Activated B cell treated with CpG ODN at 0.5 μM for 24 hours (primary cell): ENCODE measurements at regions of chr15 and their contacts with region 1.

Region 1: GRCh38 chr15:101008158-101009139 is 89.3 kb downstream of the LRRK1 start:
- DNase-seq: peak; percentile 89
- ATAC-seq: peak; percentile 96
- H3K4me3 Mint-ChIP-seq: peak overlapping the region; percentile 85
- H3K27ac Mint-ChIP-seq: no peak overlapping the region
- H3K4me1 Mint-ChIP-seq: peaks cover 23% of the 10 kb centered on the region
- H3K27me3 Mint-ChIP-seq: no peaks in the 10 kb centered on the region
- CTCF ChIP-seq: peak; percentile 62

Region 2: DNA sequence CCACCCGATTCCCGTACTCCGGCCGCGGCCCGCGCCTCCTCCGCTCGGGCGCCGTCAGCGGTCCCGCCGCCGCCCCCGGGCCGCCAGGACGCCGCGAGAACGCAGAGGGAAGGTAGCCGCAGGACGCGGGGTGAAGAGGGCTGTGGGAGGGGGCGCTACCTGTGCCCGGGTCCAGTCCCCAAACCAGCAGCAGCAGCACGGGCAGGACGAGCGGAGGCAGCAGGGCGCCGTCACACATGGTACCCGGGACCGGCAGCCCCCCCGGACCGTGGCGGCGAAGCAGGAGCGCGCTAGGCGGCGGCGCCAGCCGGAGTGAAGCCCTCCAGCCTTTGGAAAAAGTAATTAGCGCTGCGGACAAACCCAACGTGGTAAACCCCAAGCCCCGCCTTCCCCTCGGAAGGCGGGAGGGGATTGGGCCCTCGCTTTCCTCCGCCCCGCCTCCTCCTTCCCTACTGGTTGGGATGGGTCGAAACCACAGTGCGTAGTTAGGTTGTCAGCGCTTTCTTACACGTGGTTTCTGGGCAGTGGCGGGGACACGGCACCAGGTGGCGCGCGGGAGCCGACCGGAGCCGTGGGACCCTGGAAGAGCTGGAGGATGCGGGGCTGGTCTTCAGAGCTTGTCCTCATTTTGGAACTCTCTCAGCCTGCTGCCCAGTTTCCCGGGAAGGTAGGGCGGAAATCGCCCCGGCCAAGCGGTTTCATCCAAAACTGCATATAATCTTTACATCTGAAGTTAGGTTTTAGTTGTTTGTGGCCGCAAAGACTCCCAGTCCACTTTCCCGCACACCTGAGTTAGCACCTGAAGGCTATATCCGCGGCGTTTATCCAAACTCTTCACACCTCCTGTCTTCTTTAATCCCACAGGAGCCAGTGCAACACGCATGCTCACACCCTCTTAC is 666.5 kb before region 1 on chr15 and contains the start of gene ADAMTS17:
- CTCF ChIA-PET with region 1: no interaction called
- POLR2A ChIA-PET with region 1: no interaction called
- intact Hi-C with region 1: loop called (anchors 5 kb)
- DNase-seq: peak; percentile 70
- ATAC-seq: peak; percentile 99
- H3K4me3 Mint-ChIP-seq: peak within 1 kb of the TSS; percentile 50
- H3K27ac Mint-ChIP-seq: no peak within 1 kb of the TSS
- H3K4me1 Mint-ChIP-seq: peaks cover 9% of the 10 kb centered on the region
- H3K27me3 Mint-ChIP-seq: peaks cover 29% of the 10 kb centered on the region
- CTCF ChIP-seq: no peak
- total RNA-seq, gene ADAMTS17: 1.6 TPM in 1 of 2 replicates, not detected in the other

Region 3: DNA sequence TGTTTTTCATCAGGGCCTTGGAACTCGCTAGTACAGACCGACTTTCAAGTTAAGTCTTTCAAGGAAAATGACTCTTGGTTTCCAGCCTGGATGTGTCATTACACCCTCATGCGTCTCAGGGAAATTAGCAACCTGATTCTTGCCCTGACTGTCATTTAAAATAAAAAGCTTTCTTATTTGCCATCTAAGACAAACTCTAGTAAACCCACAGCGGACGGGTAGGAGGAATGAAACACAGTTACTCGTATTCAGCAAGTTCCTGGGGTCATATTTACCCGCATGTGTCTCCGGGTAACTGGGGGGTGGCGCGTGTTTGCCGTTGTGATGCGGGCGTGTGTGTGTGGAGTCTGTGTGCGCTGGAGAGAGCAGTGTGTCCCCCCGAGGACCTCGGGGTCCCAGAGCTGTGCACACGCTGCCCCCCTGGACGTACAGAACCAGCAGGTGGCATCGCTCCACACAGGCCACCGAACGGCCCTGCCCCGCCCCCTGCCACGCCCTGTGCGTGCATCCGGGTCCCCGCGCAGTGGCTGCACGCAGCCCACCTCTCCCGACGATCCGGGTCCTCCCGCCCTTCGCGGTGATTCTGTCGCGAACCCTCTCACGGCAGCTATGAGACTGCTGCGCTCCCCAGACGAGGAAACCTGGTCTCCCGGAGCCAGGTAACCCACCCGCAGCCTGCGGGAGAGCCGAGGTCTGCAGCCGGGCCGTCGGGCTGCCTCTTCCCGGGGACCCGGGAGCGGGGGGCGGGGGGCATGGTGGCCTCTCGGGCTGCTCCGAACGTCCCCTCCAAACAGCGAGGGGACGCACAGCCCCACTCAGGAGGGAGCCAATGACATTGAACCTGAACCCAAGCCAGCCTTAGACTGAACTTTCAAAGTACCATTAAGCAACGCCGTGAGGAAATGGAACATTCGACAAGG is 158.9 kb before region 1 on chr15:
- CTCF ChIA-PET with region 1: no interaction called
- POLR2A ChIA-PET with region 1: interaction called, 3 read pairs
- intact Hi-C with region 1: loop called (anchors 1 kb)
- DNase-seq: peak; percentile 51
- ATAC-seq: peak; percentile 95
- H3K4me3 Mint-ChIP-seq: peak overlapping the region; percentile 81
- H3K27ac Mint-ChIP-seq: no peak overlapping the region
- H3K4me1 Mint-ChIP-seq: peaks cover 5% of the 10 kb centered on the region
- H3K27me3 Mint-ChIP-seq: peaks cover 31% of the 10 kb centered on the region
- CTCF ChIP-seq: no peak

Region 4: GRCh38 chr15:100863796-100864267 is 144.6 kb before region 1 on chr15:
- CTCF ChIA-PET with region 1: no interaction called
- POLR2A ChIA-PET with region 1: no interaction called
- intact Hi-C with region 1: no loop called
- DNase-seq: no peak
- ATAC-seq: no peak
- H3K4me3 Mint-ChIP-seq: no peak overlapping the region
- H3K27ac Mint-ChIP-seq: no peak overlapping the region
- H3K4me1 Mint-ChIP-seq: no peaks in the 10 kb centered on the region
- H3K27me3 Mint-ChIP-seq: peaks cover 17% of the 10 kb centered on the region
- CTCF ChIP-seq: no peak

Region 5: DNA sequence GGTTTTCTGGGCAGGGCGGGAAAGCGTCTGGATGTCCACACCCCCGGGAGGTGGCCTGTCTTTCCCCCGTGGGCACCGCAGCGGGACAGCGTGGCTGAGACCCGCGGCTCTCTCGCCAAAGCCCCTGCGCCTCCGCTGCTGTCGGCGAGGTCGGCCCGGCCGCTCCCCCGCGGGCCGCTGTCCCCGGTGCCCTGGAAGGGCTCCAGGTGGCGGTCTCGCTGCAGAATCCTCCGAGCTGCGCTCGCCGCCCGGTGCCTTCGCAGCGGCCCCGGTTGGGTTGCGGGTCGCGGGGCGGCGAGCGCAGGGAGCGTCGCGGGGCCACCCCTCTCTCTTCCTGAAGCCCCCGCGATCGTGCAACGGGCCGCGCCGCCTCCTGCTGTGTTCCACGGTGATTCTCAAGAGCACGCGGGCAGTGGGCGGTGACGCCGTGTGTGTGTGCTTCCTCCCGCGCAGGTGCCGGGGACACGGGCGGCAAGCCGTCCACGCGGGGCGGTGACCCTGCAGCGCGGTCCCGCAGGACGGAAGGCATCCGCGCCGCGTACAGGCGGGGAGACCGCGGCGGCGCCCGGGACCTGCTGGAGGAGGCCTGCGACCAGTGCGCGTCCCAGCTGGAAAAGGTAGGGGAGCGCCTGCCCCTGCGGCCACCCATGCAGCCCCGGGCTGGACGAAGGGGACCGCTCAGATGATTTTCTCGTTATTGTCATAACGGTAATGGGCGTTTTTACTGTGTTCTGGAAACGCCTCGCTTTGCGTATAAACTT is 34.9 kb before region 1 on chr15:
- CTCF ChIA-PET with region 1: interaction called, 6 read pairs
- POLR2A ChIA-PET with region 1: no interaction called
- intact Hi-C with region 1: loop called (anchors 5 kb)
- DNase-seq: no peak
- ATAC-seq: peak; percentile 49
- H3K4me3 Mint-ChIP-seq: peak overlapping the region; percentile 44
- H3K27ac Mint-ChIP-seq: no peak overlapping the region
- H3K4me1 Mint-ChIP-seq: peaks cover 15% of the 10 kb centered on the region
- H3K27me3 Mint-ChIP-seq: peaks cover 8% of the 10 kb centered on the region
- CTCF ChIP-seq: no peak

Region 6: DNA sequence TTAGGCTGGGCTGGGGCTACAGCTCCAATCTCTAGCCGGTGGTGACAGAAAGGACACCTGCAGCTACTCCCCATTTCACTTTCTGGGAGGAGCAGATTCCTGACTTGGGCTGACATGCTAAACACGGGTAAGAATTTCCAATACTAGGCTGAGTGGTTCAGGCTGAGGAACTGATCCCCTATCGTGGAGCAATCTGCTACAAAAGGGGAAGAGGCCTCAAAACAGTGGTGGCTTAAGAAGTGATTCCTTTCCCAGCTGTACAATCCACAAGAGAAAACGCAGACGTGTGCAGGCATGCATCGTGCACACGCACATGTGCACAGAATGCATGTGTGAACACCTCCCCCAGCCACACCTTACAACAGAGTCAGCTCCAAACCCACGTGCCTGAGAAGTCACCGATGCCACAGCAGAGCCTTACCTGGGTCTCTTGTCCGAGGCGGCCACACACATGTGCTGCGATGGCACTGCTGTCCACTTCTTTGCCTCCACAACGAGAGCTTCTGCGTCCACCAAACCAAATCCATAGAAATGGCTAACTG is 373.3 kb after region 1 on chr15:
- CTCF ChIA-PET with region 1: no interaction called
- POLR2A ChIA-PET with region 1: no interaction called
- intact Hi-C with region 1: no loop called
- DNase-seq: no peak
- ATAC-seq: no peak
- H3K4me3 Mint-ChIP-seq: no peak overlapping the region
- H3K27ac Mint-ChIP-seq: no peak overlapping the region
- H3K4me1 Mint-ChIP-seq: no peaks in the 10 kb centered on the region
- H3K27me3 Mint-ChIP-seq: peaks cover 4% of the 10 kb centered on the region
- CTCF ChIP-seq: no peak

Region 7: GRCh38 chr15:101652098-101652782 is 643.8 kb after region 1 on chr15 and contains the start of gene TM2D3:
- CTCF ChIA-PET with region 1: no interaction called
- POLR2A ChIA-PET with region 1: no interaction called
- intact Hi-C with region 1: loop called (anchors 5 kb)
- DNase-seq: peak; percentile 99
- ATAC-seq: peak; percentile 87
- H3K4me3 Mint-ChIP-seq: peak within 1 kb of the TSS; percentile 92
- H3K27ac Mint-ChIP-seq: peak within 1 kb of the TSS; percentile 95
- H3K4me1 Mint-ChIP-seq: peaks cover 46% of the 10 kb centered on the region
- H3K27me3 Mint-ChIP-seq: no peaks in the 10 kb centered on the region
- CTCF ChIP-seq: no peak
- total RNA-seq, gene TM2D3: 45.8 and 49.9 TPM in 2 replicates